Activated T-helper 2 cell treated with anti-CD3 and anti-CD28 coated beads, Interferon-gamma antibody, Interleukin-2, Interleukin-4, amounts not matched to agents 10 μg/mL and 5 μg/mL and 100 μg/mL, durations not matched to agents 14 hours and 24 hours and 36 hours (primary cell): ENCODE measurements at regions of chr1 and their contacts with region 1.

Region 1: GRCh38 chr1:10338047-10338446 is 60.8 kb upstream of the PGD start:
- DNase-seq: peak; percentile 11
- H3K4me3 Mint-ChIP-seq: no peak overlapping the region
- H3K27ac Mint-ChIP-seq: no peak overlapping the region
- H3K4me1 Mint-ChIP-seq: no peaks in the 10 kb centered on the region
- H3K27me3 Mint-ChIP-seq: no peaks in the 10 kb centered on the region

Region 2: GRCh38 chr1:10209905-10210810 is 127.9 kb before region 1 on chr1 and contains the start of gene KIF1B:
- intact Hi-C with region 1: loop called (anchors 1 kb)
- DNase-seq: peak; percentile 95
- H3K4me3 Mint-ChIP-seq: peak within 1 kb of the TSS; percentile 89
- H3K27ac Mint-ChIP-seq: peak within 1 kb of the TSS; percentile 84
- H3K4me1 Mint-ChIP-seq: peaks cover 33% of the 10 kb centered on the region
- H3K27me3 Mint-ChIP-seq: peaks cover 4% of the 10 kb centered on the region
- total RNA-seq, gene KIF1B: 21.9 and 23.8 TPM in 2 replicates

Region 3: DNA sequence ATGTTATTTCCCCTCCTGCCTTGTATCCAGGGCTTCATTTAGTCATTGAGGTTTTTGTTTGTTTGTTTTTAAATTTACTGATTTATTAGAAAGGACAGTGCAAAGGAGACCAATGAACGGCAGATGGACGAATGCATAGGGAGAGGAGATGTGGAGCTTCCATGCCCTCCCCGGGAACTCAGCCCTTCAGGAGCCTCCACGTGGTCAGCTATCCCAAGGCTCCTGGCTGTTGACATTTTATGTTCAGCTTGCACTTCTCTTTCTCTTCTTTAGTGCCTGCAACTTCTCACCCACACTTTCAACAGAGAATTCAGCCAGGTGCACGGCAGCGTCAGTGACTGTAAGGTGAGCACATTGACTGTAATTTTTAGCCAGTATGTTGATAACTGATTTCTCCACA is 30.1 kb after region 1 on chr1:
- intact Hi-C with region 1: no loop called
- DNase-seq: no peak
- H3K4me3 Mint-ChIP-seq: no peak overlapping the region
- H3K27ac Mint-ChIP-seq: no peak overlapping the region
- H3K4me1 Mint-ChIP-seq: no peaks in the 10 kb centered on the region
- H3K27me3 Mint-ChIP-seq: no peaks in the 10 kb centered on the region